ENCODE measurements at regions of chr16 and their contacts with region 1.

Region 1: GRCh38 chr16:31713071-31713944 is 160.3 kb upstream of the ZNF267 start:
- H3K4me3 ChIP-seq: peak overlapping the region; percentile 88
- H3K27ac ChIP-seq: peak overlapping the region; percentile 86
- H3K4me1 ChIP-seq: peaks cover 5% of the 10 kb centered on the region; the same call in 1 of the 2 replicates
- CTCF ChIP-seq: no peak

Region 2: DNA sequence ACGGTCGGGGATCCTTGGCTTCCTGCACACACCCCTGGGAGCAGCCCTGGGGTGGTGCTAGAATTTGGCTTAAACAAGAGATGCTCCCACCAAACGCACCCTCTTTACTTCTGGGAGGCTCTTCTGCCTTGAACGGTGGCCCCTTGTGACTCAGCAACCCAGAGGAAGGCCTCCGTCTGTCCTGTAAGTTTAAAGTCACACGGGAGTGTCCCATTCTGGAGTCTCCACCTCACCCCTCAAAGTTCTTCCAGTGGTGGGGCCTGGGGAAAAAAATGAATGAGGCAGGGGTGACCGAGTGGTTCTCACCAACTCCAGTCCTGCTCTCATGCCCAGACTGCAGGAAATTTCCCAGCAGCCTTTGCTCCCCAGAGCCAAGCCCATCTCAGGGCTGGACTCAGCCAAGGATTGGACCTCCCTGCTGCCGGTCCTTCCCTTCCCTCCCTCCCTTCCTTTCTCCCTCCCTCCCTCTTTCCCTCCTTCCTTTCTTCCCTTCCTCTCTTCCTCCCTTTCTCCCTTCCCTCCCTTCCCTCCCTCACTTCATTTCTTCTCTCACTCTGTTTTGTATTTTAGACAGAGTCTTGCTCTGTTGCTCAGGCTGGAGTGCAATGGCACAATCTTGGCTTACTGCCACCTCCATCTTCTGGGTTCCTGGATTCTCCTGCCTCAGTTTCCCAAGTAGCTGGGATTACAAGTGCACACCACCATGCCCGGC is 308.8 kb before region 1 on chr16:
- CTCF ChIA-PET with region 1: no interaction called
- POLR2A ChIA-PET with region 1: no interaction called
- H3K4me3 ChIP-seq: peak overlapping the region; percentile 6
- H3K27ac ChIP-seq: no peak overlapping the region; the same call in 1 of the 2 replicates
- H3K4me1 ChIP-seq: no peaks in the 10 kb centered on the region
- CTCF ChIP-seq: no peak

Region 3: DNA sequence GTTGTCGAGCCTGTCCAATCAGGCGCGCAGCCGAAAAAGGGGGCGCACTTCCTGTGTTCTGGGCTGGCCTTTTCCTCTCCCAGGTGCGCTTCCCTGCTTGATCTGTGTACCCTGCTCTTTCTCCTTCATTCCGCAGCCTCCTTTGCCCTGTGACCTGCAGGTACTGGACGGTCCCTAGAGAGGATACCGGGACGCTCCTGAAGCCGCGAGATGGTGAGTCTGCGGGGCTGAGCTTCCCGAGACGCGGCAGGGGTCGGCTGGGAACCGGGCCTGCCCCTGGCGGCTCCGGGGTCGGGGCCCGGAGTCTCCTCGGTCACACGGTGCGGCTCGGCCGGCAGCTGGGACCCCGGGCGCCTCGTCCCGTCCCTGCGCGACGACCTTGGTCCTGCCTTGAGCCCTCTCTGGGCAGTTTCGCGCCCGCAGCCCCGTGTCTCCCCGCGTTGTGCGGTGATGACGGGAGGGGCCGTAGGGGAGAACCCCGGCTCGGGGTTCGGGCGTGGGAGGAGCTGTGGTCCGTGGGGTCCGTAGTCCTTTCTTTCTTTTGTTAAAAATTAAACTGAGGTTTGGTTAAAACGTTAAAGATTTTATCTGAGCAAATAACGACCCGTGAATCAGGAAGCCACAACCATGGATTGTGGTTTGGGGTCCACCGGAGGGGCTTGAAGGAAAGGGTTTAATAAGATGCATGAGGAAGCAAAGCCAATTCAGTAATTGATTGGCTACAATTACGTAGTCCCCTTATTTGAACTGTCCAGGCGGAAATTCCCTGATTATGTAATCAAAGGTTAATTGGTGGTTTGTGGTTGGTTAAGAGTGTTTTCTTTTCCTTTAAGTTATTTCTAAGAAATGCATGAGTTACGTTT is 12.6 kb before region 1 on chr16:
- CTCF ChIA-PET with region 1: interaction called, 11 read pairs
- POLR2A ChIA-PET with region 1: interaction called, 23 read pairs
- H3K4me3 ChIP-seq: peak overlapping the region; percentile 99
- H3K27ac ChIP-seq: no peak overlapping the region; the same call in 1 of the 2 replicates
- H3K4me1 ChIP-seq: no peaks in the 10 kb centered on the region; the same call in 1 of the 2 replicates
- CTCF ChIP-seq: peak; percentile 66

Region 4: GRCh38 chr16:31754998-31755615 is 41.8 kb after region 1 on chr16:
- CTCF ChIA-PET with region 1: no interaction called
- POLR2A ChIA-PET with region 1: no interaction called
- H3K4me3 ChIP-seq: no peak overlapping the region
- H3K27ac ChIP-seq: no peak overlapping the region
- H3K4me1 ChIP-seq: no peaks in the 10 kb centered on the region
- CTCF ChIP-seq: no peak

Region 5: DNA sequence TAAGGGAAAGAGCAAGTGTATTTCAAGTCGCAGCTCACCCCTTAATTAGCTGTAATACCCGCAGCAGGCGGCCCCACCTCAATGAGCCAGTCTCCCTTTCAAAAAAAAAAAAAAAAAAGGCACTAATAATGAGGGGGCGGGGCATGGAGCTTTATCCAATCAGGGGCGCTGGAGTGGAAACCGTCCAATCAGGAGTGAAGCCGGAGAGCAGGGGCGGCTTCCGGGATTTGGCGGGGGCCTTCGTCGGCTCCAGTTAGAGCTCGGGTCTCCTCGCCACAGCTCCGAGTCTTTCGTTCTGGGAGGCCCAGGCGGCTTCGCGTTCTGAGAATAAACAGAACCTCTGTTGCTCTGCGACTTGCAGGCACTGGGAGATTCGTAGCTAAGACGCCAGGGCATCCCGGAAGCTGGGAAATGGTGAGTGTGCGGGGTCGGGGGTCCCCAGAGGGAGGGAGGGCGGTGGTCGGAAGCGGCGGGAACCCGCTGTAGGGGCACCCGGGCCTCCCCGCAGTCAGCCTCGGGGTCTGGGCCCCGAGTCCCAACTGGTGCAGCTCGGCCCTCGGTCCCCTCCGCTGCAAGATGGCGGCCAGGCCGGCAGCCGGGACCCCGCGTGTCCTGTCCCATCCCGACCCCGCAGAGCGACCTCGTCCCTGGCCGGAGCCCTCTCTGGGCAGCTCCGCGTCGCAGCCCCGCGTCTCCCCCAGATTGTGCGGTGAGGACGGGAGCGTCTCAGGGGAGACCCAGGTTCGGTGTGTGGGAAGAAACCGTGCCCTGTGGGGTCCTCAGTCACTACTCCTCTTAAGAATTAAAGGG is 160.5 kb after region 1 on chr16 and contains the start of gene ZNF267:
- CTCF ChIA-PET with region 1: interaction called, 3 read pairs
- POLR2A ChIA-PET with region 1: interaction called, 17 read pairs
- H3K4me3 ChIP-seq: peak within 1 kb of the TSS; percentile 84
- H3K27ac ChIP-seq: peak within 1 kb of the TSS; percentile 94
- H3K4me1 ChIP-seq: peaks cover 21% of the 10 kb centered on the region
- CTCF ChIP-seq: no peak; the same call in 1 of the 2 replicates